PC-3 (cell line): ENCODE measurements at regions of chr1 and their contacts with region 1.

Region 1: DNA sequence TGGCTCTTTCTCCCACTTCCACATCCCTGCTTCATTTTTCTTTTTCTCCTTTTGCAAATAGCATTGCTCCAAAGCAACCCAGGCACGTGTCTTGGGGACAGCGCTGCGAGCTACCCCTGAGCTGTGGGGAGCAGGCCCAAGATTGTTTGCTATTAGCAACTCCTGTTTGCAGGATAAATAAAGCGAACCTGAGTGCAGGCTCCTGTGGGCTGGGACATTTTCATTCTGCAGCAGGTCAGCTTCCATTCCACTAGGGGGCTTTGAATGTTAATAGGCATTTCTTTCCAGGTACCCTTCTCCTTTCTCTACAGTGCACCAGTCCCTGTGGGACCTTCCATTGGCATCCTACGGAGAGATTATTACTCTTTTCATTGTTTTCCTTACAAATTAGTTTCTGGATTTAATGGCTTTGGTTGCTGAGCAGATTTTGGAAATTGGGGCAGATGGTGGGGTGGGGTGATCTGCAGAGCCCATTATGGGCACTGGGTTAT is 54.0 kb downstream of the OLFML3 start:
- DNase-seq: peak; percentile 88
- ATAC-seq: peak; percentile 86
- H3K4me3 ChIP-seq: peak overlapping the region; percentile 50
- H3K27ac ChIP-seq: peak overlapping the region; percentile 90
- H3K4me1 ChIP-seq: peaks cover 38% of the 10 kb centered on the region
- H3K27me3 ChIP-seq: no peaks in the 10 kb centered on the region
- CTCF ChIP-seq: peak; percentile 86

Region 2: GRCh38 chr1:113991467-113991997 is 41.7 kb before region 1 on chr1:
- CTCF ChIA-PET with region 1: no interaction called
- POLR2A ChIA-PET with region 1: no interaction called
- intact Hi-C with region 1: loop called (anchors 5 kb)
- DNase-seq: no peak
- ATAC-seq: no peak
- H3K4me3 ChIP-seq: no peak overlapping the region
- H3K27ac ChIP-seq: no peak overlapping the region
- H3K4me1 ChIP-seq: no peaks in the 10 kb centered on the region
- H3K27me3 ChIP-seq: no peaks in the 10 kb centered on the region
- CTCF ChIP-seq: no peak

Region 3: GRCh38 chr1:114093624-114094376 is 60.5 kb after region 1 on chr1:
- CTCF ChIA-PET with region 1: no interaction called
- POLR2A ChIA-PET with region 1: no interaction called
- intact Hi-C with region 1: loop called (anchors 5 kb)
- DNase-seq: peak; percentile 89
- ATAC-seq: peak; percentile 71
- H3K4me3 ChIP-seq: peak overlapping the region; percentile 24; the same call in 1 of the 2 replicates
- H3K27ac ChIP-seq: peak overlapping the region; percentile 93
- H3K4me1 ChIP-seq: peaks cover 45% of the 10 kb centered on the region
- H3K27me3 ChIP-seq: no peaks in the 10 kb centered on the region
- CTCF ChIP-seq: peak; percentile 71

Region 4: GRCh38 chr1:114695430-114696058 is 662.3 kb after region 1 on chr1 and contains the start of gene AMPD1:
- CTCF ChIA-PET with region 1: no interaction called
- POLR2A ChIA-PET with region 1: no interaction called
- intact Hi-C with region 1: no loop called
- DNase-seq: peak; percentile 6
- ATAC-seq: no peak
- H3K4me3 ChIP-seq: no peak within 1 kb of the TSS
- H3K27ac ChIP-seq: no peak within 1 kb of the TSS
- H3K4me1 ChIP-seq: no peaks in the 10 kb centered on the region
- H3K27me3 ChIP-seq: no peaks in the 10 kb centered on the region
- CTCF ChIP-seq: no peak
- total RNA-seq, gene AMPD1: not detected in 2 replicates